CD4-positive, alpha-beta memory T cell (primary cell): ENCODE measurements at regions of chrX and their contacts with region 1.

Region 1: GRCh38 chrX:123960042-123960611 is 1.4 kb upstream of the STAG2 start:
- DNase-seq: peak; percentile 88 to 92 (median 89)
- H3K4me3 ChIP-seq: peak overlapping the region; percentile 39 to 74
- H3K4me3 Mint-ChIP-seq: peak overlapping the region; percentile 89 to 99 (median 97)
- H3K27ac ChIP-seq: peak overlapping the region; percentile 98
- H3K27ac Mint-ChIP-seq: peak overlapping the region; percentile 97 to 100 (median 98)
- H3K4me1 ChIP-seq: peaks cover 18% of the 10 kb centered on the region
- H3K4me1 Mint-ChIP-seq: peaks cover 9 to 44% (median 16%) of the 10 kb centered on the region in 4 donors
- H3K27me3 ChIP-seq: no peaks in the 10 kb centered on the region
- H3K27me3 Mint-ChIP-seq: peaks cover 0 to 1% of the 10 kb centered on the region in 2 donors

Region 2: GRCh38 chrX:123833387-123833786 is 126.7 kb before region 1 on chrX:
- CTCF ChIA-PET with region 1: interaction called, 4 read pairs
- POLR2A ChIA-PET with region 1: interaction called, 4 read pairs
- intact Hi-C with region 1: loop called (anchors 1 kb)
- DNase-seq: peak; percentile 51 to 61 (median 57)
- H3K4me3 ChIP-seq: no peak overlapping the region
- H3K4me3 Mint-ChIP-seq: no peak overlapping the region
- H3K27ac ChIP-seq: no peak overlapping the region
- H3K27ac Mint-ChIP-seq: peak overlapping the region in 2 of 7 donors; percentile 19 to 41
- H3K4me1 ChIP-seq: no peaks in the 10 kb centered on the region
- H3K4me1 Mint-ChIP-seq: peaks cover 0 to 2% (median 0%) of the 10 kb centered on the region in 4 donors
- H3K27me3 ChIP-seq: no peaks in the 10 kb centered on the region
- H3K27me3 Mint-ChIP-seq: no peaks in the 10 kb centered on the region

Region 3: DNA sequence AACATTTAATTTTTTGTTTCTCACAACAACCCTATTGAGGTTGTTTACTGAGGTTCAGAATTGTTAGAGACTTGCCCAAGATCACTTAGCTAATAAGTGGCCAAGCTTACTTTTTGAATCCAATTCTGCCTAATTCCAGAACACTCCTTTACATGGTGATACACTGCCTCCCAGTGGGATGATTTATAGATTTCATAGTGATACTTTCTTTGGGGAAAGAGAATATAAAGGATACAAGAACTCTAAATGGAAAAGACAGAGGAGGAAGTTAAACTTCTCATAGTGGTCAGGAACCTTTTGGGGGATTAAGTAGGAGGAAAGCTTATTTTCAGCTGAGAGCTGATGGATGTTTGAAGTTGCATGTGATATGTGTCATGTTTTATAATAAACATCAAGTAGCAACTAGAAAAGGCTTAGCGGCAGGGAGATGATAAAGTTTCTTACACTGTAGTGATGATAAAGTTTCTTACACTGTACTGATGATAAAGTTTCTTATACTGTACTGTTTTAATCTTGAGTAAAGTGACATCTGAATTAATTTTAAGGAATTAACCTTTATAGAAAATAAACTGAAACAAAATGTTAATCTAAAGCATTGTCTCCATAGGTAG is 16.7 kb after region 1 on chrX:
- CTCF ChIA-PET with region 1: interaction called, 5 read pairs
- POLR2A ChIA-PET with region 1: interaction called, 6 read pairs
- intact Hi-C with region 1: loop called (anchors 1 kb)
- DNase-seq: peak in 2 of 5 donors; percentile 21 to 26
- H3K4me3 ChIP-seq: no peak overlapping the region
- H3K4me3 Mint-ChIP-seq: peak overlapping the region in 5 of 8 donors; percentile 0 to 59 (median 24)
- H3K27ac ChIP-seq: no peak overlapping the region
- H3K27ac Mint-ChIP-seq: peak overlapping the region in 3 of 7 donors; percentile 12 to 65 (median 43)
- H3K4me1 ChIP-seq: peaks cover 59% of the 10 kb centered on the region
- H3K4me1 Mint-ChIP-seq: peaks cover 30 to 62% (median 37%) of the 10 kb centered on the region in 4 donors
- H3K27me3 ChIP-seq: no peaks in the 10 kb centered on the region
- H3K27me3 Mint-ChIP-seq: no peaks in the 10 kb centered on the region

Region 4: GRCh38 chrX:124086411-124086810 is 126.3 kb after region 1 on chrX:
- CTCF ChIA-PET with region 1: no interaction called
- POLR2A ChIA-PET with region 1: interaction called, 10 read pairs
- intact Hi-C with region 1: loop called (anchors 1 kb)
- DNase-seq: peak; percentile 59 to 76 (median 69)
- H3K4me3 ChIP-seq: no peak overlapping the region
- H3K4me3 Mint-ChIP-seq: peak overlapping the region; percentile 3 to 86 (median 42)
- H3K27ac ChIP-seq: peak overlapping the region; percentile 43
- H3K27ac Mint-ChIP-seq: peak overlapping the region; percentile 85 to 96 (median 88)
- H3K4me1 ChIP-seq: peaks cover 32% of the 10 kb centered on the region
- H3K4me1 Mint-ChIP-seq: peaks cover 15 to 33% (median 26%) of the 10 kb centered on the region in 4 donors
- H3K27me3 ChIP-seq: no peaks in the 10 kb centered on the region
- H3K27me3 Mint-ChIP-seq: no peaks in the 10 kb centered on the region

Region 5: DNA sequence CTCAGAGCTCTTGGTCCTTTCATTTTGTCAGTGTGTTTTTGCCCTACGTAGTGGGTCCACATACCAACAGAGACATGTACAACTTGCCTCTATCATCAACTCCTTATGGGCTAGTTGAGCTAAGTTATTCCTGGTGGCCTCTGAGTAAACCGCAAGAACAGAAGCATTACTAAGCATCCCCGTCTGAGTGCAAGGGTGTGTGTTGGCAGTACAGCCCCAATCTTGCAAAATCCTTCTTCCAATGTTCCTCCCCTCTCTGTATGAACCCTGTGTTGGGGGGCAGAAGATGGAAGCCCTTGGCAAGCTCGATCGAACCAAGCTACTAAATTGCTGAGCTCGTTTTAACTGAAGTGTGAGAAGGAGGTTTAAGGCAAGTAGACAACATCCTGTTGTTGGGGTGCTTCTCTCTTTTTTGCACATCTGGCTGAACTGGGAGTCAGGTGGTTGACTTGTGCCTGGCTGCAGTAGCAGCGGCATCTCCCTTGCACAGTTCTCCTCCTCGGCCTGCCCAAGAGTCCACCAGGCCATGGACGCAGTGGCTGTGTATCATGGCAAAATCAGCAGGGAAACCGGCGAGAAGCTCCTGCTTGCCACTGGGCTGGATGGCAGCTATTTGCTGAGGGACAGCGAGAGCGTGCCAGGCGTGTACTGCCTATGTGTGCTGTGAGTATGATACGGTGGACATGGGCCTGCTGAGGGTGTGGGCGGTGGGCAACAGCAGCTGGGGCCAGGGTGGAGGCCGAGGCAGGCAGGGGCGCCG is 386.2 kb after region 1 on chrX and contains the start of gene SH2D1A:
- CTCF ChIA-PET with region 1: interaction called, 3 read pairs
- POLR2A ChIA-PET with region 1: interaction called, 4 read pairs
- intact Hi-C with region 1: loop called (anchors 5 kb)
- DNase-seq: peak; percentile 45 to 55 (median 52)
- H3K4me3 ChIP-seq: peak within 1 kb of the TSS; percentile 57 to 73
- H3K4me3 Mint-ChIP-seq: peak within 1 kb of the TSS; percentile 92 to 98 (median 96)
- H3K27ac ChIP-seq: peak within 1 kb of the TSS; percentile 68
- H3K27ac Mint-ChIP-seq: peak within 1 kb of the TSS; percentile 94 to 98 (median 95)
- H3K4me1 ChIP-seq: peaks cover 53% of the 10 kb centered on the region
- H3K4me1 Mint-ChIP-seq: peaks cover 27 to 59% (median 38%) of the 10 kb centered on the region in 4 donors
- H3K27me3 ChIP-seq: no peaks in the 10 kb centered on the region
- H3K27me3 Mint-ChIP-seq: no peaks in the 10 kb centered on the region
- total RNA-seq, gene SH2D1A: 50.3 to 53.1 TPM

Region 6: GRCh38 chrX:124736553-124737240 is 776.6 kb after region 1 on chrX:
- CTCF ChIA-PET with region 1: no interaction called
- POLR2A ChIA-PET with region 1: no interaction called
- intact Hi-C with region 1: loop called (anchors 10 kb)
- DNase-seq: peak; percentile 63 to 67 (median 65)
- H3K4me3 ChIP-seq: no peak overlapping the region
- H3K4me3 Mint-ChIP-seq: peak overlapping the region; percentile 66 to 78 (median 72)
- H3K27ac ChIP-seq: no peak overlapping the region
- H3K27ac Mint-ChIP-seq: peak overlapping the region; percentile 65 to 88 (median 82)
- H3K4me1 ChIP-seq: peaks cover 39% of the 10 kb centered on the region
- H3K4me1 Mint-ChIP-seq: peaks cover 15 to 43% (median 26%) of the 10 kb centered on the region in 4 donors
- H3K27me3 ChIP-seq: no peaks in the 10 kb centered on the region
- H3K27me3 Mint-ChIP-seq: no peaks in the 10 kb centered on the region